Panc1 (cell line): ENCODE measurements at regions of chr13 and their contacts with region 1.

Region 1: DNA sequence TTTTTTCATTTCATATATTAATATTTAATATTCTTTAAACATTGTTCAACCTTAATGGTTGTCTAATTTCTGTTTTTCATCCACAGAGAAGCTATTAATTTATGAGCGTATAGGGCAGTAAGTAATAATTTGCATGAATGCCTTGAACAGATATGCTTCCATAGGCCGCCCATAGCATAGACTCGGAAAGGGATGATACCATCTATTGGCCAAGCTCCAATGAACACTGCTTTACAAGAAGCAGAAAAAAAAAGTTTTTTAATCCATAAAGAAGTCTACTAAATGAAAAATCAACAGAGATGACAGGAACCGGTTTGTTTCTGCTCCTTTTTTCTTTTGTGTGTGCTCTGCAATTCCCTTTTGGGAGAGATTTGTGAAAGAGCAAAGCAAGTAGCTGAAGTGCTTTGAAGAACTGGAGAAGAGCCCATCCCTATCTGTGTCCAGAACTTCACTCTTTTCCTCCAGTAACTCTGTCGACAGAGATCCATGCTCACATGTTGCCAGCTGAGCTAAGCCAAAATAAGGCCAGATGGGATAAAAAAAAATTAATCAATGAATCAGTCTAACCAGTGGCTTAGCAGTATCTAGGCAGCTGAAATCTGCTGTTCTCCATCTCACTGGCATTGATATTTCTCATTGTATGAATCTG is 215.9 kb upstream of the SOX21 start:
- DNase-seq: no peak
- ATAC-seq: no peak
- H3K4me3 ChIP-seq: no peak overlapping the region
- H3K27ac ChIP-seq: no peak overlapping the region
- H3K4me1 ChIP-seq: no peaks in the 10 kb centered on the region
- H3K27me3 ChIP-seq: no peaks in the 10 kb centered on the region
- CTCF ChIP-seq: no peak

Region 2: DNA sequence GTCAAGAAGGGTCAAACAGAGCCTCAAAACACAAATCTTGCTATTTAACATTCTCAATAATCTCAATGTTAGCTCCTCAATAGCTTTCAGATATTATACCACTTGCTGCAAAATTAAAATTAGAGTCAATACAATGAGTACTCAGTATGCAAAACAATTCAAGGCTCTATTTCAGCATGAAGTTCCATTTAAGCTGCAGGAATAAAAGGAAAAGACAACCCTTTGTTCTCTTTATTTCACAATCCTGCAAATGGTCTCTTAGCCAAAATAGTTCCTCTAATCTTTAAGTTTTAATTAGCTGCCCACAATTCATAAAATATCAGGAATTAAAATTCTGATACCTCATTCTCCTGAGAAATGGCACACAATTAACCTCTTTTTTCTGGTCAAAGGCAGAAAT is 408.2 kb before region 1 on chr13:
- CTCF ChIA-PET with region 1: no interaction called
- POLR2A ChIA-PET with region 1: no interaction called
- in situ Hi-C with region 1: no loop called
- intact Hi-C with region 1: no loop called
- DNase-seq: no peak
- ATAC-seq: no peak
- H3K4me3 ChIP-seq: no peak overlapping the region
- H3K27ac ChIP-seq: no peak overlapping the region
- H3K4me1 ChIP-seq: no peaks in the 10 kb centered on the region
- H3K27me3 ChIP-seq: no peaks in the 10 kb centered on the region
- CTCF ChIP-seq: no peak

Region 3: DNA sequence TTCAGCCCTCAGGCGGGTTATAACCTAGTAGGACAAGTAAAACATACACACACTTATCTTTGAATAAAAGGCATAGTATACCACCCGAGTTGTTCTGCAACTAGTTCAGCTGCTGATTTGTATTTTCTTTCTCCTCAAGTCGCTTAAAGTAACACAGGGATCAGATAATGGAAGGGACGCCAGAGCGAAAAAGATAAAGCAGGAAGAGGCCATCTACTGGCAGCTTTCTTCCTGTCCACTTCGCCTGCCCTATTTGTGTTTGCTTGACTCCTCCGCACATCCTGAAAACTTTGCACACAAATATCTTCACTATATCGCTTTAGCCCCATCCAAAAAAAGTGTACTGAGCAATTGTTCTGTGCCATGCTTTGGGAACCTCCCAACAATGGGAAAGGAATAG is 22.1 kb after region 1 on chr13:
- CTCF ChIA-PET with region 1: interaction called, 13 read pairs
- POLR2A ChIA-PET with region 1: no interaction called
- in situ Hi-C with region 1: no loop called
- intact Hi-C with region 1: no loop called
- DNase-seq: no peak
- ATAC-seq: no peak
- H3K4me3 ChIP-seq: no peak overlapping the region
- H3K27ac ChIP-seq: no peak overlapping the region
- H3K4me1 ChIP-seq: no peaks in the 10 kb centered on the region
- H3K27me3 ChIP-seq: no peaks in the 10 kb centered on the region
- CTCF ChIP-seq: peak; percentile 33; the same call in 1 of the 2 replicates